ENCODE measurements at regions of chr6 and their contacts with region 1.

Region 1: DNA sequence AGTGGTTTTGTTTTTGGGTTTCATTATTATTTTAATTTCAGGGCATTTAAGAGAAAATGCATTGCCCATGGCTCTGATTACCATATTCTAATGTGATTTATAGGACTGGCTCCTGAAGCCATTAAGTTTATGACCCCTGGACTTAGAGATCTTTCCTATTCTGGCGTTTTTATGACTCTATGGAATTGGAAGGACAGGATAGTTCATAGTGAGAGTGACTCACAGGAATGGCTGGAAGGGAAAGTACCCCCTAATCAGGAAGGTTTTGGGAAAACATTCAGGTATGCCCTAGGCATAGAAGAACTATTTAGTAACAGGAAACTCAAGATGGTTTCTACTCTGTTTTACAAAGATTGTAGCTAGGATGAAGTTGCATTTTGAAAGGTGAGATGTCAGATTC is 108.6 kb upstream of the SLC2A12 start:
- DNase-seq: no peak
- ATAC-seq: no peak
- H3K4me3 ChIP-seq: no peak overlapping the region
- H3K27ac ChIP-seq: no peak overlapping the region
- H3K4me1 ChIP-seq: no peaks in the 10 kb centered on the region
- H3K27me3 ChIP-seq: no peaks in the 10 kb centered on the region

Region 2: DNA sequence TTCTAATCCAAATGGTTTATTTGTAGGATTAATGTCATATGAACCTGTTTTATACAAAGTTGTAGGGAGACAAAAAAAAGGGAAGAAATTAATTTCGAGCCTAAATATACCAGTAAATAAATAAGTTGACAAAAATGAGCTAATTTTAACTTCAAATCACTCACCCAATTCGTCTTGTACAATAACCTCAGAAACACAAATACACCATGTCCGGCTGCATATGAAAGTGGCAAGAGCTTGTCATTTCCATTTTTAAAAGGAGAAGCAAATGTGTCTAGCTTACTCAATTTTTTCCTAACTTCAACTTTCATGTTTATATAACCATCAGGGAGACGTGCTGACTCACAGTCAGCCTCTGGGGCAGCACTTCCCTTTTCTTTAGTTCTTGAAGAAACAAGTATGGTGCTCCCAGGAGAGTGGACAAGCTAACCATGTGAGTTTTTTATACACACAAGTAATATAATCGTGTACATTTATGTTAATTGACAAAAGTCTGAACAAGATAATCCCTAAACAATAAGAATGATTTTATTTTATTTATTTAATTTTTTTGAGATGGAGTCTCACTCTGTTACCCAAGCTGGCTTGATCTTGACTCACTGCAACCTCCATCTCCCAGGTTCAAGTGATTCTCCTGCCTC is 212.4 kb after region 1 on chr6:
- intact Hi-C with region 1: no loop called
- DNase-seq: peak in 1 of 2 donors; percentile 85
- ATAC-seq: peak; percentile 86
- H3K4me3 ChIP-seq: no peak overlapping the region
- H3K27ac ChIP-seq: no peak overlapping the region
- H3K4me1 ChIP-seq: peaks cover 0 to 4% of the 10 kb centered on the region in 2 donors
- H3K27me3 ChIP-seq: no peaks in the 10 kb centered on the region

Region 3: GRCh38 chr6:134822920-134823709 is 662.1 kb after region 1 on chr6:
- intact Hi-C with region 1: loop called (anchors 5 kb)
- DNase-seq: no peak
- ATAC-seq: peak; percentile 80
- H3K4me3 ChIP-seq: no peak overlapping the region
- H3K27ac ChIP-seq: no peak overlapping the region
- H3K4me1 ChIP-seq: peaks cover 3 to 5% of the 10 kb centered on the region in 2 donors
- H3K27me3 ChIP-seq: no peaks in the 10 kb centered on the region

Region 4: GRCh38 chr6:134882426-134883038 is 721.5 kb after region 1 on chr6:
- intact Hi-C with region 1: loop called in 1 of 2 experiments (anchors 2 kb)
- DNase-seq: peak; percentile 77 to 84
- ATAC-seq: peak; percentile 88
- H3K4me3 ChIP-seq: no peak overlapping the region
- H3K27ac ChIP-seq: no peak overlapping the region
- H3K4me1 ChIP-seq: no peaks in the 10 kb centered on the region
- H3K27me3 ChIP-seq: no peaks in the 10 kb centered on the region

Region 5: GRCh38 chr6:134943522-134944111 is 782.6 kb after region 1 on chr6:
- intact Hi-C with region 1: loop called in 1 of 2 experiments (anchors 5 kb)
- DNase-seq: no peak
- ATAC-seq: no peak
- H3K4me3 ChIP-seq: no peak overlapping the region
- H3K27ac ChIP-seq: no peak overlapping the region
- H3K4me1 ChIP-seq: no peaks in the 10 kb centered on the region
- H3K27me3 ChIP-seq: no peaks in the 10 kb centered on the region

Measured in aorta (tissue), 5 donors.